ENCODE measurements at regions of chr17 and their contacts with region 1.

Region 1: GRCh38 chr17:35254107-35254802 is 11.4 kb downstream of the SLFN5 start:
- DNase-seq: peak; percentile 92
- ATAC-seq: peak; percentile 85
- H3K4me3 ChIP-seq: no peak overlapping the region
- H3K27ac ChIP-seq: peak overlapping the region; percentile 78
- H3K4me1 ChIP-seq: peaks cover 33% of the 10 kb centered on the region
- H3K27me3 ChIP-seq: no peaks in the 10 kb centered on the region
- CTCF ChIP-seq: no peak

Region 2: DNA sequence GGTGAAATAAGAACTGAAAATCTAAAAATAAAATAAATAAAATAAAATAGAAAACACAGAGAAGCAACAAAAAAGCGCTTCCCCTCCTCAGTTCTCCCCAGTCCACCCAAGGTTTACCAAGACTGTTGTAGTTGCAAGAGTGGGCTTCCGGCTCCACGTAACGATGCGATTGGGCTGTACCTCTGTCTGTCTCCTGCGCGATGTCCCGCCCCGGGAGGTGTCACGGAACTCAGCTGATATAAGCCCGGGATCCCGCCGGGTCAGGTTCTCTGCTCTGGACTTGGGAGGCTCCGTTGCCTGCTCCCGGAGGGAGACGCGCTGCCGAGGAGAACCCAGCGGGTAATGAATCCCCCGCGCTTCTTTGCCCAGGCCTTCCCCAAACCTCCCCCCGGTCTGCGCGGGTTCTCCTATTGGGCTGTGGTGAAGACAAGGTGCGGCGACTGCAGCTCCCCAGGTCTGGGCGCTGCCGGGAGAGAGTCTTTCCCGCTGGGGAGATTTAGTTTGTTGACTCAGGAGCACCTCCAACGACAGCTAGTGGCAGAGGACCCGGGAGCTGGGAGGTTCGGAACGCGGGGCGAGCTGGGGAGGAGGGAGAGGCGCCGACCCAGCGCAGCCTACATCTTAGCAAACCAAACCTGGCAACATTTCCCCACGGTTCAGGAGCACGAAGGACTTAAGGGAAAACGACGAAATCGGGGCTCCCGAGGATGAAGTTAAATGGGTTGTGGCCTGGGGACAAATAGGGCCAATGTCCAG is 11.3 kb before region 1 on chr17 and contains the start of gene SLFN5:
- CTCF ChIA-PET with region 1: no interaction called
- POLR2A ChIA-PET with region 1: interaction called, 5 read pairs
- intact Hi-C with region 1: loop called (anchors 1 kb)
- DNase-seq: peak; percentile 83
- ATAC-seq: peak; percentile 74
- H3K4me3 ChIP-seq: peak within 1 kb of the TSS; percentile 88
- H3K27ac ChIP-seq: peak within 1 kb of the TSS; percentile 98
- H3K4me1 ChIP-seq: peaks cover 40% of the 10 kb centered on the region
- H3K27me3 ChIP-seq: no peaks in the 10 kb centered on the region
- CTCF ChIP-seq: no peak
- total RNA-seq, gene SLFN5: 7.5 and 14.5 TPM in 2 replicates

Region 3: DNA sequence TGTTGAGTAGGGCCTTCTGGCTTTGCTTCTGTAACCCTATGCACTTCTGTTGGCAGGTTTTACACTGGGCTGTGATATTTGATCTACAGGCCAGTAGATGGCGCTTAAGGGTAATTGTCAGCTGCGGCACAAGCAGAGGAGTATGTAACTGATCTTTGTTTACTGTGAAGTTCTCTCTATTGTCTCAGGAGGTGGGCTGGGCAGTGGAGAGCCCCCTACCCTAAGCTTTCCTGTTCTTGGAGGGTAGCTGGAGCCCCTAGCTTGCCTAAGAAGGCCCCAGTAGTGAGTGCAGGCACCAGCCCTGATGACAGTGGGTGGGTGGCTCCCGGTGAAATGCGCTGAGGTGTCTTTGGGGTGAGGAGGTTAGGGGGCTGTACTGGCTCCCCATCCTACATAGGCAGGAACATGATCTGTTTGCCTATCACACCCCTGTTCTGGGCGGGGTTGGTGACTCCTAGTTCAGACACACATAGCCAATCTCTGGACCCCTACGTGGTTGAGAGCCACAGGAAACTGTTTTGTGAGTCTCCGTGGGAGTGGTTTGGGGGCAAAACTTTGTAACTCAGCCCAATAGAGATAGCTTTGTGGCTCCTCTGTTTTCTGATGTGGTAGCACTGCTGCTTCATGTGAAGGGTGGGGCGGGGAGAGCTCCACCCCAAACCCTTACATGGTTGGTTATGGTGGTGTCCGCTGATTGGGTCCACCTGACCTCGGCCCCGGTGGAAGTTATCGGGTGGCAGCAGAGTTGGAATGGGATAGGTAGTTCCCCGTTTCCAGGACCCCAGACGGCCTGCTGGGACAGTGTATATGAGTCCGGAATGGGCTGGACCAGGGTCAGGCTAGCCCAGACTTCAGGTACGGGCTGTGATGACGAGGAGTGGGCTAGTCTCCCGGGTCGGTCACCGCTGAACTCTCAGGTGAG is 58.8 kb after region 1 on chr17:
- CTCF ChIA-PET with region 1: no interaction called
- POLR2A ChIA-PET with region 1: no interaction called
- intact Hi-C with region 1: loop called (anchors 10 kb)
- DNase-seq: peak; percentile 57
- ATAC-seq: peak; percentile 87
- H3K4me3 ChIP-seq: no peak overlapping the region
- H3K27ac ChIP-seq: no peak overlapping the region
- H3K4me1 ChIP-seq: peaks cover 17% of the 10 kb centered on the region; the same call in 1 of the 2 replicates
- H3K27me3 ChIP-seq: no peaks in the 10 kb centered on the region
- CTCF ChIP-seq: peak; percentile 75

Region 4: DNA sequence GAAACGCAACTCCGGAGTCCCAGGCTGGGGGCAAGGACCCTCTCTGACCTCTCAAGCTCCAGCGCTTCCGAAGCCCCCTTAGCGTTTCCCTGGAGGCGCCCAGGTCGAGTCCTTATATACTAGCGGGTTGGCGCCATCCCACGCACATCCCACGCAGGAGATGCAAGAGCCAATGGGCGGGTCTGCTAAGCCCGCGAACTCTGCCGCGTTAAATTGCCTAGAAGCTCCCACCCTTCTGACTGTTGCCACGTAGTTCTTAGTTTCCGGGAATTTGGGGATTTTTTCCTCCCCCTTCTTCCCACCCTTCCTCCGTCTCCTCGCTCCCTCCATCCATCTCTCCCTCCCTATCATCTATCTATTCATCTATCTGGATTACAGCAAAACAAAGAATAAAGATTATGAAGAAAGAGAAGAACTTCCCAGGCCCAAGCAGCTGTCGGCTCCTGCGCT is 119.3 kb after region 1 on chr17 and contains the start of gene SLFN11:
- CTCF ChIA-PET with region 1: interaction called, 3 read pairs
- POLR2A ChIA-PET with region 1: no interaction called
- intact Hi-C with region 1: loop called (anchors 10 kb)
- DNase-seq: peak; percentile 53
- ATAC-seq: peak; percentile 80
- H3K4me3 ChIP-seq: peak within 1 kb of the TSS; percentile 78
- H3K27ac ChIP-seq: peak within 1 kb of the TSS; percentile 9; the same call in 1 of the 2 replicates
- H3K4me1 ChIP-seq: no peaks in the 10 kb centered on the region
- H3K27me3 ChIP-seq: no peaks in the 10 kb centered on the region
- CTCF ChIP-seq: no peak
- total RNA-seq, gene SLFN11: 7.5 and 13.9 TPM in 2 replicates

Region 5: GRCh38 chr17:35529866-35530265 is 275.6 kb after region 1 on chr17:
- CTCF ChIA-PET with region 1: no interaction called
- POLR2A ChIA-PET with region 1: no interaction called
- intact Hi-C with region 1: loop called (anchors 5 kb)
- DNase-seq: no peak
- ATAC-seq: no peak
- H3K4me3 ChIP-seq: no peak overlapping the region
- H3K27ac ChIP-seq: no peak overlapping the region
- H3K4me1 ChIP-seq: no peaks in the 10 kb centered on the region
- H3K27me3 ChIP-seq: no peaks in the 10 kb centered on the region
- CTCF ChIP-seq: no peak

Region 6: GRCh38 chr17:35808962-35809854 is 555.0 kb after region 1 on chr17 and contains the start of gene TAF15:
- CTCF ChIA-PET with region 1: no interaction called
- POLR2A ChIA-PET with region 1: no interaction called
- intact Hi-C with region 1: loop called (anchors 5 kb)
- DNase-seq: peak; percentile 94
- ATAC-seq: peak; percentile 90
- H3K4me3 ChIP-seq: peak within 1 kb of the TSS; percentile 97
- H3K27ac ChIP-seq: peak within 1 kb of the TSS; percentile 88
- H3K4me1 ChIP-seq: peaks cover 31% of the 10 kb centered on the region
- H3K27me3 ChIP-seq: no peaks in the 10 kb centered on the region
- CTCF ChIP-seq: peak; percentile 78
- total RNA-seq, gene TAF15: 32.4 and 48.1 TPM in 2 replicates

Measured in PC-3 (cell line).